Right ventricle myocardium inferior (tissue), 1 donor: ENCODE measurements at regions of chr9 and their contacts with region 1.

Region 1: GRCh38 chr9:21334701-21335632 is at the start of gene KLHL9:
- DNase-seq: peak; percentile 96
- ATAC-seq: peak; percentile 100
- total RNA-seq, gene KLHL9: 12.2 TPM

Region 2: DNA sequence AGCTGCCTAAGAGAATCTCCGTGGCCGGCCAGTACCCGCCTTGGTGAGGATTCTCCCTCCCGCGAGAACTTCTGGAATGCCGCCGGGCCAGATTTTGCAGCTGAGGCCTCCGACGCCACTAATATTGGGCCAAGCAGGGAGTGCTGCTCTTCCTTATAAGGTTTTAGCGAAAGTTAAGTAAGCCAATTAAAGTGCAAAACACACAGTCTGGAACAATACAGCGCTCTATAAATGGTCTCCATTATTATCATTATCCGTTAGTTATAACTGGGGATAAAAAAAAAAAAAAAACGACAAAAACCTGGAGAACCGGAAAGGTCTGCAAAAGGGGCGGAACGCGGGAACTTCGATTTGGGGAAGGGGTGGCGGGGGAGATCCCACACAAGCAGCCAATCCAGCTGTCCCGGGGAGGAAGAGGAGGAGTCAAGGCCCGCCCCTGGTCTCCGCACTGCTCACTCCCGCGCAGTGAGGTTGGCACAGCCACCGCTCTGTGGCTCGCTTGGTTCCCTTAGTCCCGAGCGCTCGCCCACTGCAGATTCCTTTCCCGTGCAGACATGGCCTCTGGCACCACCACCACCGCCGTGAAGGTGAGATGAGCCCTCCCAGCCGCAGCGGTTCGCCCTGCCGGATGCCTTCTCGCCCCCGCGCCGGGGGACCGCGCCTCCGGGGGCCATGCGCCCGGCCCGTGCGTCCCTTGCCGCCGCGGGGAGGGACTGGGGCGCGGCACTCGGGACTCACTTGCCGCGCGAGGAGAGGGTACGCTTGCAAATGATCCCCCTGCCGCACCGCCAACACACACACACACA is 467.4 kb after region 1 on chr9 and contains the start of gene MTAP:
- intact Hi-C with region 1: loop called (anchors 5 kb)
- DNase-seq: peak; percentile 92
- ATAC-seq: peak; percentile 99
- total RNA-seq, gene MTAP: 20.4 TPM